H1 (cell line): ENCODE measurements at regions of chr17 and their contacts with region 1.

Region 1: DNA sequence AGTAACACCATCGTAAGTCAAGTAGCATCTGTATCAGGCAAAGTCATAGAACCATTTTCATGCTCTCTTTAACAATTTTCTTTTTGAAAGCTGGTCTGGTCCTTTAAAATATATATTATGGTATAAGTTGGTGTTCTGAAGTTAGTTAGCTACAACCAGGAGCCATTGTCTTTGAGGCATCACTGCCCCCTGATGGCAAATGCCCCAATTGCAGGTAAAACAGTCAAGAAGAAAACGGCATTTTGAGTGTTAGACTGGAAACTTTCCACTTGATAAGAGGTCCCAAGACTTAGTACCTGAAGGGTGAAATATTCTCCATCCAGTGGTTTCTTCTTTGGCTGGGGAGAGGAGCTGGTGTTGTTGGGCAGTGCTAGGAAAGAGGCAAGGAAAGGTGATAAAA is 14.1 kb downstream of the TP53 start:
- DNase-seq: peak in 1 of 2 experiments; percentile 89
- H3K4me3 ChIP-seq: no peak overlapping the region
- H3K27ac ChIP-seq: no peak overlapping the region
- H3K4me1 ChIP-seq: peaks cover 5 to 15% (median 10%) of the 10 kb centered on the region in 4 experiments
- H3K27me3 ChIP-seq: no peaks in the 10 kb centered on the region
- CTCF ChIP-seq: peak in 2 of 3 experiments; percentile 66 to 74; a peak in 3 of 4 replicates
- EP300 ChIP-seq: no peak
- POLR2A ChIP-seq: no peak
- RAD21 ChIP-seq: peak; percentile 79 to 85

Region 2: DNA sequence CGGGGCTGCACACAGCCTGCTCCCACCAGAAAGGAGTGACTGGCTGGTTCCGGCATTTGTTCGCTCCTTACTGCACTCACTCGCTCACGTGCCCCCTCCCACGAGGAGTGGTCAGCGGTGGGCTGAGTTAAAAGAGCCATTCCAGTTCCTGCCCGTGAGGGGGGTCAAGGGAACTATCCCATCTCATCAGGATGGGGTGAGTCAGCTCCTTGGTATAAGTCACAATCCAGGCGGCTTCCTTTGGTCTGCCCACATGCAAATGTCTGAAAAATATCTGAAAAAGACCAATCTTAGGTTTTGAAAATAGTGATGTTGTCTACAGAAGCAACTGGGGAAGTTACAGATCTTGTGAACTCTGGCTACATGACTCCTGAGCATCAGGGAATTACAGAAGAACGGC is 134.3 kb before region 1 on chr17:
- CTCF ChIA-PET with region 1: no interaction called
- POLR2A ChIA-PET with region 1: no interaction called
- DNase-seq: no peak
- H3K4me3 ChIP-seq: no peak overlapping the region
- H3K27ac ChIP-seq: no peak overlapping the region
- H3K4me1 ChIP-seq: no peaks in the 10 kb centered on the region
- H3K27me3 ChIP-seq: no peaks in the 10 kb centered on the region; a peak in 1 of 7 replicates
- CTCF ChIP-seq: no peak
- EP300 ChIP-seq: no peak
- POLR2A ChIP-seq: no peak
- RAD21 ChIP-seq: no peak

Region 3: DNA sequence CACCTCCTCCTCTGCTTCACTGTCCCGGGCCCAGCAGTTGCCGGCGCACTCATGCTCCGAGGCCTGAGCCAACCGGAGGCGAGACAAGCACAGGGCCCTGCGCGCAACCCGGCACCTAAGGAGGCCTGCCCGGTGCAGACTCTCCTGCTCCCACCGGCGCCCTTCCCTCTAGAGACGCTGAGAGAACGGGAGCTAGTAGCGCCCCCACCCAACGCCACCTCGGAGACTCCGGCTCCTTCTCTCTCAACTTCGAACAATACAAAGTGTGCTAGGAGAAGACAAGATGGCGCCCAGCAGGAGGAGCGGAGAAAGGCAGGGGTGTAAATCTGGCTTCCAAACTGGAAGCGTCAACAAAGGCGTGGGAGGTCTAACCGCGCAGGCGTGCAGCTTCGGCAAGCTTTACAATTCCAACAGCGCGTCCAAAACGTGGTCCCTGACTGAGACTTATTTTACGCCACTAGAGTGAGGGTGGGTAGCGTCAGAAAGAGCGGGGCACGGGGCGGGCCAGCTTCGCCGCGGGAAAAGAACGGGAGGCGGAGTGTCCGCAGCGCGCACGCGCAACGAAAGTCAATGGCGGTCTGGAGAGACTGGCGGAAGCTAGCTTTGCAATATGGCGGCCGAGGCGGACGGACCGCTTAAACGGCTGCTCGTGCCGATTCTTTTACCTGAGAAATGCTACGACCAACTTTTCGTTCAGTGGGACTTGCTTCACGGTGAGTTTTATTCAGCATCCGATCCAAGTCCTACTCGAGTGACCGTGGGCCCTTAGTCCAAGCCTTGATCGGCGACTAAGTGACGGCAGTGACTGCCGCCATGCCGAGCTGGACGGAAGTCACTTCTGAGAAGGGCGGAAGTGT is 89.8 kb before region 1 on chr17 and contains the start of gene MPDU1:
- CTCF ChIA-PET with region 1: interaction called, 13 read pairs
- POLR2A ChIA-PET with region 1: interaction called, 36 read pairs
- DNase-seq: peak in 1 of 2 experiments; percentile 95
- H3K4me3 ChIP-seq: peak within 1 kb of the TSS; percentile 47 to 95 (median 70)
- H3K27ac ChIP-seq: peak within 1 kb of the TSS; percentile 98
- H3K4me1 ChIP-seq: peaks cover 0 to 19% (median 4%) of the 10 kb centered on the region in 4 experiments; a peak in 6 of 7 replicates
- H3K27me3 ChIP-seq: no peaks in the 10 kb centered on the region
- CTCF ChIP-seq: no peak
- EP300 ChIP-seq: no peak
- POLR2A ChIP-seq: peak; percentile 75 to 94
- RAD21 ChIP-seq: no peak
- total RNA-seq, gene MPDU1: 63.2 and 66.9 TPM in 2 replicates

Region 4: GRCh38 chr17:7614422-7615264 is 58.6 kb before region 1 on chr17 and contains the start of gene FXR2:
- CTCF ChIA-PET with region 1: interaction called, 12 read pairs
- POLR2A ChIA-PET with region 1: interaction called, 2,272 read pairs
- DNase-seq: peak; percentile 97 to 100
- H3K4me3 ChIP-seq: peak within 1 kb of the TSS; percentile 87 to 95 (median 92)
- H3K27ac ChIP-seq: peak within 1 kb of the TSS; percentile 52; the same call in 1 of the 2 replicates
- H3K4me1 ChIP-seq: peaks cover 0 to 5% (median 1%) of the 10 kb centered on the region in 4 experiments; a peak in 4 of 7 replicates
- H3K27me3 ChIP-seq: no peaks in the 10 kb centered on the region
- CTCF ChIP-seq: peak; percentile 62 to 76 (median 64)
- EP300 ChIP-seq: no peak
- POLR2A ChIP-seq: peak in 1 of 2 experiments; percentile 24; a peak in 1 of 3 replicates
- RAD21 ChIP-seq: peak; percentile 14 to 29
- total RNA-seq, gene FXR2: 26.2 and 26.8 TPM in 2 replicates

Region 5: GRCh38 chr17:7627250-7628121 is 45.8 kb before region 1 on chr17 and contains the start of gene SAT2:
- CTCF ChIA-PET with region 1: interaction called, 332 read pairs
- POLR2A ChIA-PET with region 1: interaction called, 2,272 read pairs
- DNase-seq: peak; percentile 87 to 100
- H3K4me3 ChIP-seq: peak within 1 kb of the TSS; percentile 72 to 98 (median 76)
- H3K27ac ChIP-seq: peak within 1 kb of the TSS; percentile 16; the same call in 1 of the 2 replicates
- H3K4me1 ChIP-seq: peaks cover 2 to 10% (median 4%) of the 10 kb centered on the region in 4 experiments; a peak in 5 of 7 replicates
- H3K27me3 ChIP-seq: no peaks in the 10 kb centered on the region
- CTCF ChIP-seq: no peak
- EP300 ChIP-seq: peak in 1 of 2 experiments; percentile 77; a peak in 1 of 3 replicates
- POLR2A ChIP-seq: peak in 1 of 2 experiments; percentile 75; a peak in 2 of 3 replicates
- RAD21 ChIP-seq: no peak
- total RNA-seq, gene SAT2: 72.3 and 75.3 TPM in 2 replicates

Region 6: DNA sequence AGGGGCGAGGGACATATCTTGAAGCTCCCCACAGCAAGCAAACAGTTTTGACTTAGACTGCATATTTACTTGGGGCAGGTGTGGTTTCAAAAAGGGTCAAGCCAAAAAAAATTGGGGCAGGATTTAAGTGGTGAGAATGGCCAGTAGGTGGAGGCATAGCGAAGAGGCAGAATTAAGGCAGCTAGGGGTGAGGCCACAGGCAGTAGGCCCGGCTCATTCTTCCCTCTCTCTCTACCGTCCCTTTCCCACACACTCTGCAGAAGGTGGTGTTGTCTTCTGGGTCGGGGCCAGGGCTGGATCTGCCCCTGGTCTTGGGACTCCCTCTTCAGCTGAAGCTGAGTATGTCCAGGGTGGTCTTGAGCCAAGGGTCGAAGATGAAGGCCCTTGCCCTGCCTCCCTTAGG is 40.7 kb before region 1 on chr17:
- CTCF ChIA-PET with region 1: interaction called, 332 read pairs
- POLR2A ChIA-PET with region 1: interaction called, 2,272 read pairs
- DNase-seq: peak; percentile 39 to 66
- H3K4me3 ChIP-seq: no peak overlapping the region
- H3K27ac ChIP-seq: no peak overlapping the region
- H3K4me1 ChIP-seq: peaks cover 0 to 12% (median 3%) of the 10 kb centered on the region in 4 experiments; a peak in 3 of 7 replicates
- H3K27me3 ChIP-seq: no peaks in the 10 kb centered on the region
- CTCF ChIP-seq: peak; percentile 61 to 85 (median 79)
- EP300 ChIP-seq: no peak
- POLR2A ChIP-seq: no peak
- RAD21 ChIP-seq: peak; percentile 75 to 81

Region 7: GRCh38 chr17:7650509-7651096 is 22.6 kb before region 1 on chr17 and contains the start of gene ATP1B2:
- CTCF ChIA-PET with region 1: interaction called, 198 read pairs
- POLR2A ChIA-PET with region 1: interaction called, 2,272 read pairs
- DNase-seq: peak; percentile 72 to 90
- H3K4me3 ChIP-seq: peak within 1 kb of the TSS; percentile 43 to 87 (median 63)
- H3K27ac ChIP-seq: no peak within 1 kb of the TSS
- H3K4me1 ChIP-seq: peaks cover 0 to 12% (median 8%) of the 10 kb centered on the region in 4 experiments; a peak in 5 of 7 replicates
- H3K27me3 ChIP-seq: peaks cover 0 to 13% (median 4%) of the 10 kb centered on the region in 4 experiments; a peak in 4 of 7 replicates
- CTCF ChIP-seq: no peak
- EP300 ChIP-seq: no peak
- POLR2A ChIP-seq: peak in 1 of 2 experiments; percentile 81; a peak in 2 of 3 replicates
- RAD21 ChIP-seq: no peak
- total RNA-seq, gene ATP1B2: 19.8 and 21.0 TPM in 2 replicates

Region 8: DNA sequence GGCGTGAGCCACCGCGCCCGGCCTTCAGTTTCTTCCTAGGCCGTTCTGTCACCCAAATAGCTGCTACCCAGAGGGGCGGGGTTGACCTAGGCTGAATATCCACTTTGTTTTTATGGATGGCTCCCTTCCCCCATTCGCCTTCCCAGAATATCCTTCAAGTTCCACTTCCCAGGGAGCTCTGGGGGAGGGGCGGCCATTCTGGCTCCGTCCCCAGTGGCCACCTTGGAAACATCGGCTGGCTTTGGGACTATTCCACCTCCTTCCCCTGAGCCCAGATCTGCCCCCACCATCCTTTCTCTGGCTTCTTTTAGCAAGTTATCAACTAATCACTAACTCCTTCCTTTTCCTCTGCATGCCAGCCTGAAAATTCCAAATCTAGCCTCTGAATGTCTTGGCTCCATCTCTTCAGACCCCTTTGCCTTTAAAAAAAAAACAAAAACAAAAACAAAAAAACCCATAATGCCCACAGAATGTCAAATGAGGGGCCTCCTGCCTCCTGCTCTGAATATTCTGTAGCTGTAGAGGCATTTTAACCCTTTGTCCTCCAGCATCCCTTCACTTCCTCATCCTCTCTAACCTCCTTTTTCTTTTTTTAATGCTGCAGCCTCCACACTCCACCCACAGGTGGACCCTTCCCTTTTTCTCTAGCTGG is 16.2 kb before region 1 on chr17:
- CTCF ChIA-PET with region 1: interaction called, 198 read pairs
- POLR2A ChIA-PET with region 1: interaction called, 2,272 read pairs
- DNase-seq: peak; percentile 88 to 90
- H3K4me3 ChIP-seq: peak overlapping the region in 2 of 4 experiments; percentile 3 to 47; a peak in 3 of 8 replicates
- H3K27ac ChIP-seq: peak overlapping the region; percentile 38; the same call in 1 of the 2 replicates
- H3K4me1 ChIP-seq: peaks cover 7 to 16% (median 12%) of the 10 kb centered on the region in 4 experiments
- H3K27me3 ChIP-seq: peaks cover 0 to 9% (median 2%) of the 10 kb centered on the region in 4 experiments; a peak in 3 of 7 replicates
- CTCF ChIP-seq: peak in 2 of 3 experiments; percentile 9 to 29; a peak in 2 of 4 replicates
- EP300 ChIP-seq: 0 out of 3 replicates have a peak, but pooled peaks of 1 of the 2 experiments have one; percentile 67
- POLR2A ChIP-seq: peak in 1 of 2 experiments; percentile 60; a peak in 2 of 3 replicates
- RAD21 ChIP-seq: peak; percentile 6 to 32; a peak in 3 of 4 replicates